ENCODE measurements at regions of chr20 and their contacts with region 1.

Region 1: DNA sequence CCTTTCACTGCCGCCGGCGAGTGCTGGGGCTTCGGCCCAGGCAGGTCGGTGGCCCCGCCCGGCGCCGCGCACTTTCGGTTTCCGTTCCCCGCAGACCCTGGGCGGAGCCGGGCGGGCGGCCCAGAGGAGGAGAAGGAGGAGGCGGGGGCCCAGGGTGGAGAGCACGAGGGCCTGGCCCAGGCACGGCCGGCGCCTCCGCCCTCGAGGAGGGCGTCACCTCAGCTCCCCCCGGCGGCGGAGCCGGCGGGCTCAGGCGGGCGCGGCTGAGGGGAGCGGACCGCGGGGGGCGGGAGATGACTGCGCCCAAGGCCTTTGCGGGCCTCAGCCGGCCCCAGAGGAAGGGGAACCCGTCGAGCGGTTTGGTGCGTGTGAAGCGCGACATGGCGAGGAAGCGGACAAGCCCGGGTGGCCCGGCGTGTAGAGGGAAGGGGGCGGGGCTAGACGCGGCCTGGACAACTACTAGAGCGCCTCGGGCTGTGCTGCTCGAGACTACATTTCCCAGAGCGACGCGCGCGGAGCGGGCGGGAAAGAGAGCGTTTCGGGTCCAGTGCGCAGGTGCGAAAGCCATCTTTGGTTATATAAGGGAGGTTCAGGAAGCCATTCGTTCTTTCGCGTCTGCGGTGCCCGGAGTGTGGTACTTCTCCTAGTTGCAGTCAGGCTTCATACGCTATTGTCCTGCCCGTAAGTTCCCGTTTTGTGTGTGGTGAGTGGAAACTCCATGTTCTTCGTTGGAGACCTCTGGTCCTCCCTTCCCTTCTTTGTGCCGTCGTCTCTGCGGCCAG is at the start of gene ZNFX1:
- DNase-seq: peak; percentile 97 to 99
- ATAC-seq: peak; percentile 83 to 95 (median 86)
- H3K4me3 ChIP-seq: peak within 1 kb of the TSS; percentile 76
- H3K4me3 Mint-ChIP-seq: peak within 1 kb of the TSS; percentile 97
- H3K27ac ChIP-seq: peak within 1 kb of the TSS; percentile 90
- H3K27ac Mint-ChIP-seq: peak within 1 kb of the TSS; percentile 94 to 95
- H3K4me1 ChIP-seq: peaks cover 58% of the 10 kb centered on the region
- H3K4me1 Mint-ChIP-seq: peaks cover 69 to 81% of the 10 kb centered on the region in 2 donors
- H3K27me3 ChIP-seq: no peaks in the 10 kb centered on the region
- H3K27me3 Mint-ChIP-seq: no peaks in the 10 kb centered on the region
- CTCF ChIP-seq: no peak
- total RNA-seq, gene ZNFX1: 55.8 to 58.5 (median 57.8) TPM

Region 2: GRCh38 chr20:49267327-49267726 is 10.9 kb before region 1 on chr20:
- intact Hi-C with region 1: loop called (anchors 1 kb)
- DNase-seq: peak in 1 of 2 donors; percentile 38
- ATAC-seq: peak; percentile 64 to 76 (median 65)
- H3K4me3 ChIP-seq: no peak overlapping the region
- H3K4me3 Mint-ChIP-seq: peak overlapping the region; percentile 87
- H3K27ac ChIP-seq: peak overlapping the region; percentile 59
- H3K27ac Mint-ChIP-seq: peak overlapping the region; percentile 92 to 95
- H3K4me1 ChIP-seq: peaks cover 19% of the 10 kb centered on the region
- H3K4me1 Mint-ChIP-seq: peaks cover 53 to 57% of the 10 kb centered on the region in 2 donors
- H3K27me3 ChIP-seq: no peaks in the 10 kb centered on the region
- H3K27me3 Mint-ChIP-seq: no peaks in the 10 kb centered on the region
- CTCF ChIP-seq: no peak

Region 3: DNA sequence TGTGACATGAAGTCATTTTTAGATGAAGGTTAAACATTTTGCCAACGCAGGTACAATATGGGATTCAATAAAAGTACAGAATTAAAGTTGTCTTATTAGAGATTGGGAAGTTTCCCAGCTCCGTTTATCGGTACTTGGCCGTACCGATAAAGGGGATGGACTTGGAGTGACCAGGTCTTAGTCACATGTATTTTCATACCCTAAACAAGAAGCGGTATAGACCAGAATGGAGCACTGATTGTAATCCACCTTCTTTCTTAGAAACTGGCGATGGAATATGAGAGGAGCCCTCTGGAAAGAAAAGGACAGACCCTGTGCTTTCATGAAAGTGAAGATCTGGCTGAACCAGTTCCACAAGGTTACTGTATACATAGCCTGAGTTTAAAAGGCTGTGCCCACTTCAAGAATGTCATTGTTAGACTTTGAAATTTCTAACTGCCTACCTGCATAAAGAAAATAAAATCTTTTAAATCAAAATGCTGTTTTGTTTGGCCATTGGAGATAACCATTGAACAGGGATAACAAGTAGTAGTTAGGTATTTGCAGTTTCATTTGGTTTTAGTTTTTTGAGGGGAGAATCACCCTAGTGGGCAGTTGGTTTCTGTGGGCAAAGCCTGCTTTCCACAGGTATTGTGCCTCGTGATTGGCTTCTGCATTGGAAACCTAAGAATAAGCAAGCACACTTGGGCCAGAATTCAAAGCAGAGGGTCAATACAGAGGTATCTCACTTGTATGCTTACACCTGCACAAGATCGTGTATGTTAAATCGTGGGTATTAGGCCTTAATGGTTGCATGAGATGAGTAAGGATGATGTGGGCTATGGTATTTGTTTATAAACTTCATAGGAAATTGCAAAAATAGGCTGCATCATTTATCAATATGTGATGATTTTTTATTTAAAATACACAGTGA is 10.8 kb after region 1 on chr20:
- intact Hi-C with region 1: no loop called
- DNase-seq: no peak
- ATAC-seq: no peak
- H3K4me3 ChIP-seq: no peak overlapping the region
- H3K4me3 Mint-ChIP-seq: no peak overlapping the region
- H3K27ac ChIP-seq: no peak overlapping the region
- H3K27ac Mint-ChIP-seq: no peak overlapping the region
- H3K4me1 ChIP-seq: no peaks in the 10 kb centered on the region
- H3K4me1 Mint-ChIP-seq: peaks cover 32 to 55% of the 10 kb centered on the region in 2 donors
- H3K27me3 ChIP-seq: no peaks in the 10 kb centered on the region
- H3K27me3 Mint-ChIP-seq: no peaks in the 10 kb centered on the region
- CTCF ChIP-seq: no peak

Region 4: GRCh38 chr20:49323622-49324238 is 45.5 kb after region 1 on chr20:
- intact Hi-C with region 1: loop called (anchors 5 kb)
- DNase-seq: peak in 1 of 2 donors; percentile 71
- ATAC-seq: peak; percentile 80 to 89 (median 87)
- H3K4me3 ChIP-seq: no peak overlapping the region
- H3K4me3 Mint-ChIP-seq: no peak overlapping the region
- H3K27ac ChIP-seq: no peak overlapping the region
- H3K27ac Mint-ChIP-seq: peak overlapping the region in 1 of 2 donors; percentile 44
- H3K4me1 ChIP-seq: peaks cover 18% of the 10 kb centered on the region
- H3K4me1 Mint-ChIP-seq: peaks cover 10 to 27% of the 10 kb centered on the region in 2 donors
- H3K27me3 ChIP-seq: peaks cover 14% of the 10 kb centered on the region
- H3K27me3 Mint-ChIP-seq: peaks cover 25 to 30% of the 10 kb centered on the region in 2 donors
- CTCF ChIP-seq: peak; percentile 32

Region 5: DNA sequence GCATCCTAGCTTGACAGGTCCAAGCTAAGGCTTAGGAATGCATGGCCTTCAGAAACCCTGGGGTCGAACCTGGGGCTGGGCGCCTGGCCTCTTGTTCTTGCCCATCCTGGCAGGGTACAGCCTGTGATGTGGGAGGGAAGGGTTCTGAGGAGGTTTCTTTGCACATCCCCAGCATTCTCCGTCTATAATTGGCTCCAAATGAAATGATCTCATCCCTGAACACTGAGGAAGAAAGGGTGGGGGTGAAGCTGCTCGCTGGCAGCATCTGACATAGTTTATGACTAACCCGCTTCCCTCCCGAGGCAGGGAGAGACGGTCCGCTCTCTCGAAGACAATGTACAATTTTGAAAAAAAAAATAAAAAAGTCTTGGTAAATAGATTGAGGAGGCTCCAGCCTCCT is 66.7 kb after region 1 on chr20:
- intact Hi-C with region 1: no loop called
- DNase-seq: no peak
- ATAC-seq: no peak
- H3K4me3 ChIP-seq: no peak overlapping the region
- H3K4me3 Mint-ChIP-seq: no peak overlapping the region
- H3K27ac ChIP-seq: no peak overlapping the region
- H3K27ac Mint-ChIP-seq: no peak overlapping the region
- H3K4me1 ChIP-seq: no peaks in the 10 kb centered on the region
- H3K4me1 Mint-ChIP-seq: peaks cover 0 to 4% of the 10 kb centered on the region in 2 donors
- H3K27me3 ChIP-seq: no peaks in the 10 kb centered on the region
- H3K27me3 Mint-ChIP-seq: peaks cover 15 to 21% of the 10 kb centered on the region in 2 donors
- CTCF ChIP-seq: no peak